ENCODE measurements at regions of chr10 and their contacts with region 1.

Region 1: GRCh38 chr10:102352066-102352715 is 43.3 kb upstream of the NFKB2 start:
- DNase-seq: peak; percentile 87
- H3K4me3 Mint-ChIP-seq: no peak overlapping the region
- H3K27ac Mint-ChIP-seq: no peak overlapping the region
- H3K4me1 Mint-ChIP-seq: no peaks in the 10 kb centered on the region
- H3K27me3 Mint-ChIP-seq: no peaks in the 10 kb centered on the region

Region 2: DNA sequence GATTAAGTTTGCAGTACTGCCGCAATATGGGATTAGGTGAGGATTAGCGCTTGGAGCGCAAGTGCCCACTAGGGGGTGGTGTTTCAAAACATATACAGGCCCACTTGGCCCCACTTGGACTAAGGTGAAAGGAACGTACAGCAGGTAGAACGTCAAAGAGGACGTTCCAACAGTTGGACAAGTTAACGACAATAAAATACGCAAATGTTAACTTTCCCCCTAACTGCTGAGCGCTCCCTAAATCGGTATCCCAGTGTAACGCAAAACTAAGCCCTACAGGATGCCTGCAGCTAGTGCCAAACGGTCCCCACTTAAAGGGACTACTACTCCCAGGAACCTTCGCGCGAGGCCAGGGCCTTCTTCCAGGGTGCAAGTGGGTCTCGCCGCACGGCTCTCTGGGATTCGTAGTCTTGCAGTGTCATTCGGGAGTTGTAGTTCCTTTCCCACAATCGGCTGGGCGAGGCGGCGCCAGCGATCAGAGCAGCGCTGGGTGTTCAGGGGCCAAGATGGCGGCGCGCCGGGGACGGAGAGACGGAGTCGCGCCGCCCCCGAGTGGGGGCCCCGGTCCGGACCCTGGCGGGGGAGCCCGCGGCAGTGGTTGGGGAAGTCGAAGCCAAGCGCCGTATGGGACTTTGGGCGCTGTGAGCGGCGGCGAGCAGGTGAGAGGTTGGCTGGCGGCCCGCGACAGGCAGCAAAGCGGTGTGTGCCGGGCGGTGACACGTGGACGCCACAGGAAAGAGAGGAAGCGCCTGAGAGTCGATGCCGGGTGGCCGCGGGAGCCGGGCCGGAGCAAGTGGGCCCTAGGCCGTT is 219.4 kb before region 1 on chr10 and contains the start of gene PPRC1:
- CTCF ChIA-PET with region 1: interaction called, 5 read pairs
- intact Hi-C with region 1: loop called (anchors 1 kb)
- DNase-seq: peak; percentile 99
- H3K4me3 Mint-ChIP-seq: peak within 1 kb of the TSS; percentile 97
- H3K27ac Mint-ChIP-seq: peak within 1 kb of the TSS; percentile 96
- H3K4me1 Mint-ChIP-seq: peaks cover 42% of the 10 kb centered on the region
- H3K27me3 Mint-ChIP-seq: no peaks in the 10 kb centered on the region
- total RNA-seq, gene PPRC1: 54.6 to 55.0 TPM

Region 3: DNA sequence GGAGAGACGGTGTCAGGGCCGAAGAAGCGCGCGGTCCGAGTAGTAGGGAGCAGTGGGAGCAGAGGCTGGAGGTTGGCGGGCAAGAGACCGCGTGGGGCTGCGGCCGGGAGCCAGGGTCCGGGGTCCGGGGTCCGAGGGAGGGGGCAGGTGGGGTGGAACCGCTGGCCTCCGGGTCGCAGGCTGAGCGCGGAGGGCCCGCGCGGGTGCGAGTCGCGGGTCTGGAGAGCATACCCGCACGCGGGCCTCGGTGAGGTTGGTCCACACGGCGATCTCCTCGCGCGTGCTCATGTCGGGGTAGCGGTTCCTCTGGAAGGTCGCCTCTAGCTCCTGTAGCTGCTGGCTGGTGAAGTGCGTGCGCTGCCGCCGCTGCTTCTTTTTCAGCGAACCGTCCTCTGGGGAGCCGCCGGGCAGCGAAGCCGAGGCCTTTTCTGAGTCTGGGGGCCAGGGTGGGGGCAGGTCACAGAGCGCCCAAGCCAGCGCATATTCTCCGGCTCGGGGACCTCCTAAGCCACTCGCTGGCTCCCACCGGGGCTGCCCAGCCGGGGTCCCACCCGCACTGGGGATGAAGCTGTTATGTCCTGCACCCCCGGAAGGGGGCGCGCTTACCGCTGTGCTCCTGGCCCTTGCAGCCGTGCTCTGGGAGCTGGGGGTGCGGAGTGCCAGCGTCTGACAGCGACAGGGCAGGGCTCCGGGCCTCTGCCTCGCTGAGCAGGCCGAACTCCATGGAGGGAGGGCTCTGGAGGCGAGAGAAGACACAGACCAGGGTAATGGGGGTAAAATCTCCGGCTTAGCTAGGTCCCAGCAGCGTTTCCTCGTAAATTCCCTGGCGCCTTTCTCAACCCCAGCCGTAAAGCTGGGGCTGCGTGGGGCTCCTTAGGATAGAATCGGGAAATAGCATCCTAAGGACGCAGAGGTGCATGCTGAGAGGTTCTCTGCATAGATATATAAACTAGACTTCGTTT is 120.6 kb before region 1 on chr10:
- CTCF ChIA-PET with region 1: interaction called, 685 read pairs
- intact Hi-C with region 1: loop called (anchors 1 kb)
- DNase-seq: peak; percentile 78
- H3K4me3 Mint-ChIP-seq: peak overlapping the region; percentile 60
- H3K27ac Mint-ChIP-seq: no peak overlapping the region
- H3K4me1 Mint-ChIP-seq: peaks cover 4% of the 10 kb centered on the region
- H3K27me3 Mint-ChIP-seq: peaks cover 52% of the 10 kb centered on the region

Region 4: DNA sequence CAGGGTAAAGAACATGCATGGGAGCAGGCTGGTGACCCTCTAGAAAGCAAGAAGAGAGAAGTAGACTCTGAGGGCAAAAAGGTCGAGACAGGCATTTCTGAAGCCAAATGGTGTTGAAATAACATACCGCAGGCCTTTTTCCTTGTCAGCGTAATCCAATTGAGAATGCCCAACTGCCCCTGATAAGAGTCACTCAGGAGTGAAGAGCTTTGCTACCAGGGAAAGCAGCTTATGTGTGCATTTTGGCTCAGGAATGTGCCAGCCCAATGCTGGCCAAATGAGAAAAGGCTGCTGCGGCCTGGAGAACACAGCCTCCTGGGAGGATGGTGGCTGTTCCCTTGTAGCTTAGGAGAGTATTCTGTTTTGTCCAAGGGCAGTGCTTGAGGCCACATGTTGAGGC is 18.1 kb before region 1 on chr10:
- CTCF ChIA-PET with region 1: interaction called, 13 read pairs
- intact Hi-C with region 1: no loop called
- DNase-seq: no peak
- H3K4me3 Mint-ChIP-seq: no peak overlapping the region
- H3K27ac Mint-ChIP-seq: no peak overlapping the region
- H3K4me1 Mint-ChIP-seq: peaks cover 20% of the 10 kb centered on the region
- H3K27me3 Mint-ChIP-seq: no peaks in the 10 kb centered on the region

Region 5: GRCh38 chr10:102375250-102375649 is 23.1 kb after region 1 on chr10:
- CTCF ChIA-PET with region 1: interaction called, 51 read pairs
- intact Hi-C with region 1: no loop called
- DNase-seq: no peak
- H3K4me3 Mint-ChIP-seq: no peak overlapping the region
- H3K27ac Mint-ChIP-seq: no peak overlapping the region
- H3K4me1 Mint-ChIP-seq: no peaks in the 10 kb centered on the region
- H3K27me3 Mint-ChIP-seq: no peaks in the 10 kb centered on the region

Region 6: GRCh38 chr10:102629661-102630614 is 277.7 kb after region 1 on chr10:
- CTCF ChIA-PET with region 1: no interaction called
- intact Hi-C with region 1: no loop called
- DNase-seq: no peak
- H3K4me3 Mint-ChIP-seq: no peak overlapping the region
- H3K27ac Mint-ChIP-seq: no peak overlapping the region
- H3K4me1 Mint-ChIP-seq: peaks cover 32% of the 10 kb centered on the region
- H3K27me3 Mint-ChIP-seq: no peaks in the 10 kb centered on the region

Measured in activated naive CD4-positive, alpha-beta T cell treated with anti-CD3 and anti-CD28 coated beads for 36 hours (primary cell).